BJ (cell line): ENCODE measurements at regions of chr2 and their contacts with region 1.

Region 1: DNA sequence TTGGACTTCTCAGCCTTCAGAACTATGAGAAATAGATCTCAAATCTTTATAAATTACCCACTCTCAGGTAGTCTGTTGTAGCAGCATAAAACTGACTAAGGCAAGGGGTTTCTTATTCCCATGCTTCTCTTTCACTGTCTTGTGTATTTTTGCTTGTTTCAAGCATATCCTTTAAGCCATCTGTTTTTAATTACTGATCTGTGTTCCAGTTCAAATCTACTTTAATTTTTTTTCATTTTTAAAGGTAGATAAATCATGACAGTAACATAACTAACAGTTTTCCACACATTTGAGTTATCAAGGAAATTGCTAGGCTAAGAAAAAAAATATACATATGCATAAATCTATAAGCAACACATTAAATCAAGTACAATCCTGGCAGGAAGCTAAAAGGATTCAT is 317.9 kb upstream of the TNP1 start:
- DNase-seq: no peak
- H3K4me3 ChIP-seq: no peak overlapping the region
- H3K27me3 ChIP-seq: no peaks in the 10 kb centered on the region
- CTCF ChIP-seq: no peak

Region 2: DNA sequence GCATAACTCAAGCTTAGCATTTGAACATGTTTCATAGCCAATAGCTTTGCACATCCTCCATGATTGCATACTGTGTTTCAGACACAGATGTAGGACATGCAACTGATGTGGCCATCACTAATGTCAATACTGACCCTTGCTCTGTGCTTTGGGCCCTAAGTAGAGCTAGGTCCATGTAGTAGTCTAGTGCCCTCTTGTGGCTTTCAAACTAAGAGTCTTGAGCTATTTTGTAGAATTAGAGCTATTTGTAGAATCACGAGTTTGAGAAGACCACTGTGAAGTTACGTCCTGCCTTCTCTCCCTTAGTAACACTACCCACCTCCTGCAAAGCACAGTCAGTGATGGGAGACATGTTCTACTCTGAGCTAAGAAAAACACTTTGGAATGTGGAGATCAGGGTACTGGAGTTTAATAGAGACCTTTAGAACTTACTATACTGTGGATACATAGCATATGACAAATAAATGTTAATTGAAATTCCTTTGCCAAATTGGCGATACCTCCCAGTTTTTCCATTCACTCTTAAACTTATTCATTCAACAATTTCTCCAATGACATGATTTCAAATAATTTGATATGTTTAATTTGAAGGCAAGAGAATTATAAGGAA is 11.4 kb before region 1 on chr2:
- CTCF ChIA-PET with region 1: interaction called, 9 read pairs
- POLR2A ChIA-PET with region 1: interaction called, 10 read pairs
- DNase-seq: no peak
- H3K4me3 ChIP-seq: no peak overlapping the region
- H3K27me3 ChIP-seq: no peaks in the 10 kb centered on the region; the same call in 1 of the 2 replicates
- CTCF ChIP-seq: peak; percentile 61